ENCODE measurements at regions of chr2 and their contacts with region 1.

Region 1: DNA sequence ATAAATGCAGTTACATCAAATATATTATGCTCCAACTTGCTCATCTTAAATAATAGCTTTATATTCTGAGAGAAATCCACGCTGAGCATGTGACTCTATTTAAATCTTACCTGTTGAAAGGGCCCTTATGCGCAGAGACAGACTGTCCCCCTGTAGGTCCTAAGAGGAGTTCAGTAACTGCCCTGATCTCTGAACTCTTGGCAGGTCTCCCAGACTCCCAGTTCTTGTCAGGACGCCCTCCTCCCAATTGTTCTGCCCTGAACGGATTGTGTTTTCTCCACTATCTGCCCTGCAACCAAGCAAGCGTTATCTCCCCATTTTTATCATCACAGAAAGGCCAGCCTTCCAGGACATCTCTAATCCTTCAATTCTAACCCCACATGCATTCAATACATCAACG is 954.6 kb downstream of the TSN start:
- DNase-seq: no peak
- H3K4me3 ChIP-seq: no peak overlapping the region
- H3K27ac ChIP-seq: no peak overlapping the region
- H3K4me1 ChIP-seq: no peaks in the 10 kb centered on the region
- H3K27me3 ChIP-seq: no peaks in the 10 kb centered on the region
- CTCF ChIP-seq: no peak
- EP300 ChIP-seq: no peak
- POLR2A ChIP-seq: no peak

Region 2: GRCh38 chr2:122660786-122661634 is 49.0 kb before region 1 on chr2:
- intact Hi-C with region 1: no loop called
- DNase-seq: peak in 1 of 5 donors; percentile 16
- H3K4me3 ChIP-seq: no peak overlapping the region
- H3K27ac ChIP-seq: no peak overlapping the region
- H3K4me1 ChIP-seq: no peaks in the 10 kb centered on the region
- H3K27me3 ChIP-seq: no peaks in the 10 kb centered on the region
- CTCF ChIP-seq: no peak
- EP300 ChIP-seq: no peak
- POLR2A ChIP-seq: no peak

Region 3: GRCh38 chr2:123808243-123808642 is 1098.2 kb after region 1 on chr2:
- intact Hi-C with region 1: loop called in 1 of 4 experiments (anchors 5 kb)
- DNase-seq: no peak
- H3K4me3 ChIP-seq: no peak overlapping the region
- H3K27ac ChIP-seq: no peak overlapping the region
- H3K4me1 ChIP-seq: no peaks in the 10 kb centered on the region
- H3K27me3 ChIP-seq: no peaks in the 10 kb centered on the region
- CTCF ChIP-seq: no peak
- EP300 ChIP-seq: no peak
- POLR2A ChIP-seq: no peak

Measured in ovary (tissue), 10 donors.